PC-9 (cell line): ENCODE measurements at regions of chr7 and their contacts with region 1.

Region 1: GRCh38 chr7:140541513-140542227 is 62.4 kb upstream of the MKRN1 start:
- DNase-seq: peak; percentile 68 to 82
- H3K4me3 ChIP-seq: peak overlapping the region; percentile 40; the same call in 1 of the 2 replicates
- H3K27ac ChIP-seq: peak overlapping the region; percentile 54
- H3K4me1 ChIP-seq: peaks cover 19% of the 10 kb centered on the region
- H3K27me3 ChIP-seq: no peaks in the 10 kb centered on the region
- CTCF ChIP-seq: no peak

Region 2: DNA sequence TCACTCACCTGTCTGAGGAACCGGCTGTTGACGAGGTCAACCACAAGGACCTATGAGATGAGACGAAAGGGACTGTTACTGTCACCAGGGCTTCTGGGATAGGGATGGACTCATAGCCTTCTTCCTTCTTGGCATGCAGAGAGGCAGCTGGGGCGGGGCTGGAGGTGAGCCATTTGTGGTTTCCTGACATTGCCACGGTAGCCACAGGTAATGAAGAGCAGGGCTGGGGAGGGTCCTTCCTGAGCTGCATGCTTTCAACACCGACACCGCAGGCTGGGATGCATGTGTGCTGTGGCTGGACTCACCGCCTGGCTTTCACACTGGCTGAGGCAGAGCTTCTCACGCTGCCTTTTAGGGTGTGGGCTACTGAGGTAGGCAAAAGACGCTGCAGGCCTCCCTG is 15.9 kb before region 1 on chr7:
- CTCF ChIA-PET with region 1: no interaction called
- POLR2A ChIA-PET with region 1: no interaction called
- intact Hi-C with region 1: loop called (anchors 2 kb)
- DNase-seq: peak; percentile 65 to 86
- H3K4me3 ChIP-seq: no peak overlapping the region
- H3K27ac ChIP-seq: no peak overlapping the region
- H3K4me1 ChIP-seq: peaks cover 16% of the 10 kb centered on the region
- H3K27me3 ChIP-seq: no peaks in the 10 kb centered on the region
- CTCF ChIP-seq: no peak